ENCODE measurements at regions of chr1 and their contacts with region 1.

Region 1: GRCh38 chr1:205711104-205712020 is 31.1 kb upstream of the SLC45A3 start:
- DNase-seq: peak; percentile 66
- H3K4me3 ChIP-seq: no peak overlapping the region
- H3K27ac ChIP-seq: no peak overlapping the region
- H3K27me3 ChIP-seq: no peaks in the 10 kb centered on the region
- CTCF ChIP-seq: peak; percentile 90

Region 2: GRCh38 chr1:204872262-204872881 is 839.0 kb before region 1 on chr1:
- CTCF ChIA-PET with region 1: no interaction called
- POLR2A ChIA-PET with region 1: interaction called, 14 read pairs
- DNase-seq: no peak
- H3K4me3 ChIP-seq: no peak overlapping the region
- H3K27ac ChIP-seq: no peak overlapping the region
- H3K27me3 ChIP-seq: no peaks in the 10 kb centered on the region
- CTCF ChIP-seq: no peak

Region 3: GRCh38 chr1:205416322-205416721 is 295.0 kb before region 1 on chr1:
- CTCF ChIA-PET with region 1: no interaction called
- POLR2A ChIA-PET with region 1: no interaction called
- DNase-seq: no peak
- H3K4me3 ChIP-seq: no peak overlapping the region
- H3K27ac ChIP-seq: no peak overlapping the region
- H3K27me3 ChIP-seq: peaks cover 64% of the 10 kb centered on the region
- CTCF ChIP-seq: no peak

Region 4: GRCh38 chr1:205680073-205680851 is 31.1 kb before region 1 on chr1 and contains the start of gene SLC45A3:
- CTCF ChIA-PET with region 1: interaction called, 46 read pairs
- POLR2A ChIA-PET with region 1: no interaction called
- DNase-seq: no peak
- H3K4me3 ChIP-seq: peak within 1 kb of the TSS; percentile 68
- H3K27ac ChIP-seq: peak within 1 kb of the TSS; percentile 31
- H3K27me3 ChIP-seq: peaks cover 4% of the 10 kb centered on the region
- CTCF ChIP-seq: no peak
- polyA plus RNA-seq, gene SLC45A3: 1.7 and 1.8 TPM in 2 replicates

Region 5: GRCh38 chr1:205729945-205730610 is 18.7 kb after region 1 on chr1:
- CTCF ChIA-PET with region 1: interaction called, 174 read pairs
- POLR2A ChIA-PET with region 1: no interaction called
- DNase-seq: no peak
- H3K4me3 ChIP-seq: no peak overlapping the region
- H3K27ac ChIP-seq: no peak overlapping the region
- H3K27me3 ChIP-seq: no peaks in the 10 kb centered on the region
- CTCF ChIP-seq: no peak

Region 6: DNA sequence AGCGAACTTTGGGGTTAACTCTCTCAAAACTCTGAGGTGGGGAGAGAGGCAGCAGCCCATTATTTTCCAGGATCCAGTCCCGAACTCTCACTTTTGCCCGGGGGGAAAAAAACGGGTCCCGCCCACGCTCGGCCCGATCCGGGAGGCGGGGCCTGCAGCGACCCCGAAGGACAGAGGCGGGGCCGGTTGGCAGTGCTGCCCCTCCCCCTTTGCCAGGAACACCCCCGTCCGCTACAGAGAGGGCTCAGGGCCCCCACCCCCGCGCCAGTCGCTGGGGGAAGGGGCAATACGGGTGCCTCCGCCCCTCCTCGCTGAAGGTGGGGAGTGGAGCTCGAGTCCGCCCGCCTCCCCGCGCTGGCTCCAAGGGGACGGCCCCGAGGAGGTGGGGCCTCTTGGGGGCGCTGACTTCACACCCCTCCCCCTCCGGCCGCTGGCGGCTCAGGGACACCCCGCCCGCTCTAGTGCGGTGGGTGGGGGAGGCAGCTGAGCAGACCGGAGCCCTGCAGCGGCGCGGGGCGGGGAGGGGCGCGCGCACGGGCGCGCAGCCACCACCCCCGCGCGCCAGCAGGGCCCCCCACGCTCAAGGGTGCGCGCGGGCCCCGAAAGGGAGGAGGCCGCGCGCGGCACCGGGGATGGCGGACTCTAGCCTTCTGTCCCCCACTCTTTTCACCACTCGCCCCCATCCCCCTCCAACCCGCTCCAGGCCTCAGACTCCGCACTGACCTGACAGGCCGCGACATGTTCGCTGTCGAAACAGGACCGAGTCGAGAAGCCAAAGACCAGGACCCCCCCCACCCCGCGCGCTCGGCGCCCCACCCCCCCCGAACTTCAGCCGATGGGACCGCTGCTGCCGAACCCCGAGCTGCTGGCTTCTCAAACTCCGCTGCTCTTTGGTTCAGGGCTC is 38.1 kb after region 1 on chr1:
- CTCF ChIA-PET with region 1: interaction called, 25 read pairs
- POLR2A ChIA-PET with region 1: interaction called, 6 read pairs
- DNase-seq: peak; percentile 95
- H3K4me3 ChIP-seq: peak overlapping the region; percentile 88
- H3K27ac ChIP-seq: peak overlapping the region; percentile 91
- H3K27me3 ChIP-seq: peaks cover 2% of the 10 kb centered on the region
- CTCF ChIP-seq: no peak

Region 7: GRCh38 chr1:205878026-205878425 is 166.7 kb after region 1 on chr1:
- CTCF ChIA-PET with region 1: no interaction called
- POLR2A ChIA-PET with region 1: no interaction called
- DNase-seq: no peak
- H3K4me3 ChIP-seq: no peak overlapping the region
- H3K27ac ChIP-seq: no peak overlapping the region
- H3K27me3 ChIP-seq: peaks cover 20% of the 10 kb centered on the region
- CTCF ChIP-seq: no peak

Measured in AG04450 (cell line).